Caki2 (cell line): ENCODE measurements at regions of chr5 and their contacts with region 1.

Region 1: GRCh38 chr5:149002053-149002452 is 60.8 kb downstream of the SH3TC2 start:
- DNase-seq: peak; percentile 97

Region 2: DNA sequence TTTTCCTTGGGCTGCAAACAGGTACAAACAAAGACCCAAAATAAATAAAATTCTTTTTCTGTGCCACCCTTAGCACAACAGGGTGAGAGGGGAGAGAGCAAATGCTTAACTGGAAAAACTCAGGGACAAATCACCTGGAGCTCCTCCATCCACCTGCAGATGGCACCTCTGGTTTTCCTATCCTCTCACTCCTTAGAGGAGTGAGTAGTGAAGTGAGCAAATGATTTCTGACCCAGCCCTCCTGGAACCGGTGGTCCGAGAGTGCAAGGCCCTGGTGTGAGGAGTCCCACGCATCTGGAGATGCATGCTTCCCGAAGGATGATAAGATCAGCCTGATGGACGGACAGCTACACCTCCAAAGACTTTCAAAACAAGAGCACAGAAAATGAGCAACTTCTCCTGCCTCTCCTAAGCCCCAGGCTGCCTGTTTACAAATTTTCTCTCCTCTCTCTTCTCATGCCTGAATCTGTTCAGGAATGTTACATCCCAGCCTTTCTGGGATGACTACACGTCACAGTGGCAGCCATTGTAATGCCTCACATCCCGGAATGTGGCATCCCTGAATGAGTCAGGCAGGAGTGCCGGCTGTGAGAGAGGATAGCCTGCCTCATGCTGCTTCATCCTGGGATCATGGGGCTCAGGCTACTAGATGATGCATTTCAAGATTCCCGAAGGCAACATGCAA is 89.2 kb before region 1 on chr5:
- in situ Hi-C with region 1: loop called (anchors 10 kb)
- DNase-seq: peak; percentile 88

Region 3: GRCh38 chr5:149074106-149074505 is 72.1 kb after region 1 on chr5:
- in situ Hi-C with region 1: no loop called
- DNase-seq: no peak